Endothelial cell of umbilical vein (primary cell): ENCODE measurements at regions of chr21 and their contacts with region 1.

Region 1: DNA sequence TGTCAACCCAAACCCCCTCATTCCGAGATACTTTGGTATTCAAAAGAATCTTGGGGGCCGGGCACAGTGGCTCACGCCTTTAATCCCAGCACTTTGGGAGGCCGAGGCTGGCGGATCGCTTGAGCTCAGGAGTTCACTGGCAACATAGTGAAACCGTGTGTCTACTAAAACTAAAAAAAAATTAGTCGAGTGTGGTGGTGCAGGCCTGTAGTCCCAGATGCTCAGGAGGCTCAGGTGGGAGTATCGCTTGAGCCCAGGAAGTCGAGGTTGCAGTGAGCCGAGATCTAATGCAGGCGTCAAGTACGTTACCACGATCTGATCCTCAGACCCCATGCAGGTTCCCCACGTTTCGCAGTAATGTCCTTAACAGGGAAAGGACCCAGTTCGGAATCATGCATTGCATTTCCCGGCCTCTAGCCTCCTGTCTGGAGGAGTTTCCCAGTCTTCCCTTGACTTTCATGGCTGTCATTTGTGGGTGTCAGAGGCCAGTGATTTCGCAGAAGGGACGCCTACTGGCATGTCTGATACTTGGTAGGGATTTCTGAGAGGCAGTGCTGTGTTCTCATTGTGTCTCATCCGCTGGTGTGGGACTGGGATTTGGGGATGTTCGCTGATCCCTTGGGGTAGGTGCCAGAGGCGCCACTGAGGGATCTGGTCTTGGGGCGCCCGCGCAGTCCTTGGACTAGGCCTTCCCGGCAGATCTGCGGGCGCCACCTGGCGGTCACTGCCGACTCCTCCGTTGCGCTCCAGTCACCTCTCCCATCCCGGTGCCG is 39.3 kb upstream of the HMGN1 start:
- DNase-seq: peak; percentile 70
- H3K4me3 ChIP-seq: peak overlapping the region; percentile 26 to 41 (median 30)
- H3K27ac ChIP-seq: no peak overlapping the region
- H3K4me1 ChIP-seq: peaks cover 23% of the 10 kb centered on the region
- H3K27me3 ChIP-seq: no peaks in the 10 kb centered on the region
- CTCF ChIP-seq: peak; percentile 94 to 95
- POLR2A ChIP-seq: no peak

Region 2: DNA sequence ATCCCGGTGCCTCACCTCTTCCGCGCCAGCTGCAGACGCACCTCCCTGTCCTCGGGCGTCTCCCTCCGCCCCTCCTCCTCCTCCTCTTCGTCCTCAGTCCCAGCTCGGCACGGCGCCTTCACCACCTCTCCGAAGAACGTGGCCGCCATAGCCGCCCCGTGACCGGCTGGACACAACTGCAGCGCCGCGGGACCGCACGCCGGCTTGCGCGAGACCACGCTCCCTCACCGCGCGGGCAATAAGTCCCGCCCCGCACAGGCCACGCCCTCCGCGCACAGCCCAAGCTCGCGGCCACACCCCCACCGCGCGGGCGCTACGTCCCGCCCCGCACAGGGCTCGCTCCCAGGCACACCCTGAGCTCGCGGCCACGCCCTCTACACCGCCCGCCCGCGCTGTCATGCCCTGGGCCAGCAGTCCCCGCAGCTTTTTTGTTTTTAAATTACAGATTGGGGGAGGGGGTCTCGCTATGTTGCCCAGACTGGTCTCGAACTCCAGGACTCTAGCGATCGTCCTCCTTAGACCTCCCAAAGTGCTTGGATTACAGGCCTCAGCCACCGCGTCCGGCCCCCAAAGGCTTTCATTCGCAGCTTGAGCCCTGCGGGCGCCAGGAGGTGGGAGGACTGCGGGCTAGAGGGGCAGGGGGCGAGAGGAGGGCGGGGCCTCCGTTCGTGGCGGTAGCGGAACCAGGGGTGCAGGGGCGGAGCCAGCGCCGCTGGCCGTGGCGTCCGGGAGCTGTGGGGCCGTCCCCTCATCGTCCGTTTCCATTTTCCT is 204.8 kb before region 1 on chr21 and contains the start of gene PSMG1:
- CTCF ChIA-PET with region 1: interaction called, 7 read pairs
- POLR2A ChIA-PET with region 1: interaction called, 4 read pairs
- dilution Hi-C with region 1: no loop called
- intact Hi-C with region 1: loop called (anchors 1 kb)
- DNase-seq: peak; percentile 96
- H3K4me3 ChIP-seq: peak within 1 kb of the TSS; percentile 75 to 98 (median 92)
- H3K27ac ChIP-seq: peak within 1 kb of the TSS; percentile 70
- H3K4me1 ChIP-seq: peaks cover 18% of the 10 kb centered on the region
- H3K27me3 ChIP-seq: no peaks in the 10 kb centered on the region
- CTCF ChIP-seq: no peak
- POLR2A ChIP-seq: peak; percentile 85
- total RNA-seq, gene PSMG1: 66.3 and 75.9 TPM in 2 replicates

Region 3: GRCh38 chr21:39313571-39314142 is 74.6 kb before region 1 on chr21 and contains the start of gene BRWD1:
- CTCF ChIA-PET with region 1: interaction called, 8 read pairs
- POLR2A ChIA-PET with region 1: no interaction called
- dilution Hi-C with region 1: no loop called
- intact Hi-C with region 1: loop called (anchors 1 kb)
- DNase-seq: peak; percentile 76
- H3K4me3 ChIP-seq: peak within 1 kb of the TSS; percentile 52 to 57 (median 54)
- H3K27ac ChIP-seq: peak within 1 kb of the TSS; percentile 88
- H3K4me1 ChIP-seq: peaks cover 12% of the 10 kb centered on the region
- H3K27me3 ChIP-seq: peaks cover 4% of the 10 kb centered on the region in 2 experiments
- CTCF ChIP-seq: peak in 1 of 2 donors; percentile 11
- POLR2A ChIP-seq: no peak
- total RNA-seq, gene BRWD1: 28.8 and 33.2 TPM in 2 replicates

Region 4: GRCh38 chr21:39373644-39374043 is 14.6 kb before region 1 on chr21:
- CTCF ChIA-PET with region 1: interaction called, 37 read pairs
- POLR2A ChIA-PET with region 1: no interaction called
- dilution Hi-C with region 1: no loop called
- intact Hi-C with region 1: loop called (anchors 1 kb)
- DNase-seq: peak; percentile 36
- H3K4me3 ChIP-seq: no peak overlapping the region
- H3K27ac ChIP-seq: no peak overlapping the region
- H3K4me1 ChIP-seq: no peaks in the 10 kb centered on the region
- H3K27me3 ChIP-seq: peaks cover 7 to 10% of the 10 kb centered on the region in 2 experiments
- CTCF ChIP-seq: peak; percentile 19 to 34
- POLR2A ChIP-seq: no peak